ENCODE measurements at regions of chr10 and their contacts with region 1.

Region 1: DNA sequence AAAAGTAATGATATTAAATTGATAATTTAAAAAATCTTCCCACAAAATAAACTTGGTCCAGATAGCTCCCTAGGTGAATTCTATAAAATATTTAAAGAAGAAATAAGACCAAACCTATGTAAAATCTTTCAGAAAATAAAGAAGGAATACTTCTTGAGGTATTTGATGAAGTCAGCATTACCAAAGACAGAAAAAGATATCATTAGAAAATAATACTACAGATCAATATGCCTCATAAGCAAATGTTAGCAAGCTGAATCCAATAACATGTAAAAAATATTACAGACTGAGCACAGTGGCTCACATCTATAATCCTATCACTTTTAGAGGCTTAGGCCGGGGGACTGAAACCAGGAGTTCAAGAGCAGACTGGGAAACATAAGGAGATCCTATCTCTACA is 30.0 kb downstream of the TMEM26 start:
- DNase-seq: no peak
- H3K4me3 ChIP-seq: no peak overlapping the region
- H3K27ac ChIP-seq: no peak overlapping the region
- H3K4me1 ChIP-seq: no peaks in the 10 kb centered on the region
- H3K27me3 ChIP-seq: no peaks in the 10 kb centered on the region
- CTCF ChIP-seq: no peak

Region 2: DNA sequence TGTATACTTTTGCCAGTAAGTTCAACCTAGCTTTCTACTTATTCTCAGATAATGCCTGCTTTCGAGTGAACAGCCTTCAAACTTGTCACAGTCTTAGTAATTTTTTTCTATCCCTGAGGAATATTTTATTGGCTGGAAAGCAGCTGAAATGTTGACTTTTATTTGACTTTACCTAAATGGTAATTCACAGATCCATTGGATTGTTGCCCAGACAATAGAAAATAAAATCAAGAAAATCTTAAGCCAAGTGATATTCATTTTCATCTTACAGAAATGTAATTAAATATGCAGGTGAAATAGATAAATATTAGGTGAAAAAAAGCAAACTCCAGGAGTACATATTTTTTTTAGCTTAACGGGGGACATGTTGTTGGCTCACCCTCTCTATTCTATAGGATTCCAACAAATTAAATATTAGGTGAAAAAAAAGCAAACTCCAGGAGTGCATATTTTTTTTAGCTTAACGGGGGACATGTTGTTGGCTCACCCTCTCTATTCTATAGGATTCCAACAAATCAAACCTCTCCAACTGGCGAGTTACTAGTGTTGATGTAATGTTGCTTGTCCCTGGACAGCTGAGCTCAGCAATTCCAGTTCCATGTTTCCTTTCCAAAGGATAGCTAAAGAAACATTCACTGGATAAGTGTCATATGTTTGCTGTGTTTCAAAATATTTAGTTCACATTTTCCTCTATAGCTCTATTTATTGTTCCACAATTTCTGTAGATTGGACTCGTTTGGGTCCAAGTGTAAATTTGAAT is 25.8 kb after region 1 on chr10:
- CTCF ChIA-PET with region 1: no interaction called
- dilution Hi-C with region 1: no loop called
- in situ Hi-C with region 1: no loop called
- intact Hi-C with region 1: loop called (anchors 1 kb)
- DNase-seq: no peak
- H3K4me3 ChIP-seq: no peak overlapping the region
- H3K27ac ChIP-seq: no peak overlapping the region
- H3K4me1 ChIP-seq: no peaks in the 10 kb centered on the region
- H3K27me3 ChIP-seq: peaks cover 16% of the 10 kb centered on the region
- CTCF ChIP-seq: no peak

Region 3: DNA sequence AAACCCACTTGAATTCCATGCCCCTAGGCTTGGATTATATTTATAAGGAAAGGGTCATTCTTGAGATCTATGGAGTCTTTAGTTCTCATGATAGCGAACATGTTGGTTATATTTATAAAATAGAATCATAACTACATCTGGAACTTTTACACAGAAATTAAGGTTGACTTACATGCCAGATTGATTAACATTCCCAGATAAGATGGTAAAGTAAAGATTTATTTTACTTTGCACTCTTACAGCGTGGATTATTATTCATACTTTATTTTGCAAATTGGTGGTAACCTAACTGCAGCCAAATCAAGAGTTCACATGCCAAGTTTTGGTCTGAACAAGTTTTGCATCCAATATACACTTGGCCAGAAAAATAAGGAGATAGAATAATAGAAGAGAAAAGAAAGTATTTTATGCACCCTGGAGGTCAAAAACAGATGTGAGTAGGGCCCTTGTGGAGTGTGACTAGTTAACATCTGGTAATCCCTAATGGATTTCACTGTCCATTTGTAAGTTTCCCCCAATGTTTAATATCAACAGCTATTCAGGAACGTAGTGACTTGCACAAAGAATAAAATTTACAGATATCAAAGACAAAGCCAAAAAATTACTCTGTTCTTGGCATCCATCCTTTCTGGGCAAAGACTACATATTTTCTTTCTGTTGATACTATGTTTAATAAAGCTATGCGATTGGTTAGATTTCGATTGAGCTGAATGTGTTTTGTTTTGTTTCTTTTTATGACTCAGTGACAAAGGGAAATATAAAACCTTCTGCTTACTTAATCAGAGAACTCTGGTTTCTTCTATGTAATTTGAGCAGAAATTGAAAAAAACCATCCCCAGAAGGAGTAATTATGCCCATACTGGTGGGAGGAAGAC is 40.1 kb after region 1 on chr10:
- CTCF ChIA-PET with region 1: no interaction called
- dilution Hi-C with region 1: no loop called
- in situ Hi-C with region 1: no loop called
- intact Hi-C with region 1: no loop called
- DNase-seq: no peak
- H3K4me3 ChIP-seq: no peak overlapping the region
- H3K27ac ChIP-seq: no peak overlapping the region
- H3K4me1 ChIP-seq: no peaks in the 10 kb centered on the region
- H3K27me3 ChIP-seq: no peaks in the 10 kb centered on the region
- CTCF ChIP-seq: no peak

Measured in mammary epithelial cell (primary cell).